ENCODE measurements at regions of chr19 and their contacts with region 1.

Region 1: GRCh38 chr19:53103198-53103944 is at the start of gene ZNF160:
- DNase-seq: peak; percentile 99 to 100 (median 99)
- ATAC-seq: peak; percentile 95
- H3K4me3 ChIP-seq: peak within 1 kb of the TSS; percentile 72 to 83
- H3K4me3 Mint-ChIP-seq: peak within 1 kb of the TSS; percentile 92
- H3K27ac ChIP-seq: peak within 1 kb of the TSS; percentile 89 to 90
- H3K27ac Mint-ChIP-seq: peak within 1 kb of the TSS; percentile 97
- H3K4me1 ChIP-seq: peaks cover 14% of the 10 kb centered on the region
- H3K4me1 Mint-ChIP-seq: peaks cover 37% of the 10 kb centered on the region
- H3K27me3 ChIP-seq: no peaks in the 10 kb centered on the region
- H3K27me3 Mint-ChIP-seq: no peaks in the 10 kb centered on the region
- CTCF ChIP-seq: no peak
- total RNA-seq, gene ZNF160: 50.8 to 53.3 TPM

Region 2: DNA sequence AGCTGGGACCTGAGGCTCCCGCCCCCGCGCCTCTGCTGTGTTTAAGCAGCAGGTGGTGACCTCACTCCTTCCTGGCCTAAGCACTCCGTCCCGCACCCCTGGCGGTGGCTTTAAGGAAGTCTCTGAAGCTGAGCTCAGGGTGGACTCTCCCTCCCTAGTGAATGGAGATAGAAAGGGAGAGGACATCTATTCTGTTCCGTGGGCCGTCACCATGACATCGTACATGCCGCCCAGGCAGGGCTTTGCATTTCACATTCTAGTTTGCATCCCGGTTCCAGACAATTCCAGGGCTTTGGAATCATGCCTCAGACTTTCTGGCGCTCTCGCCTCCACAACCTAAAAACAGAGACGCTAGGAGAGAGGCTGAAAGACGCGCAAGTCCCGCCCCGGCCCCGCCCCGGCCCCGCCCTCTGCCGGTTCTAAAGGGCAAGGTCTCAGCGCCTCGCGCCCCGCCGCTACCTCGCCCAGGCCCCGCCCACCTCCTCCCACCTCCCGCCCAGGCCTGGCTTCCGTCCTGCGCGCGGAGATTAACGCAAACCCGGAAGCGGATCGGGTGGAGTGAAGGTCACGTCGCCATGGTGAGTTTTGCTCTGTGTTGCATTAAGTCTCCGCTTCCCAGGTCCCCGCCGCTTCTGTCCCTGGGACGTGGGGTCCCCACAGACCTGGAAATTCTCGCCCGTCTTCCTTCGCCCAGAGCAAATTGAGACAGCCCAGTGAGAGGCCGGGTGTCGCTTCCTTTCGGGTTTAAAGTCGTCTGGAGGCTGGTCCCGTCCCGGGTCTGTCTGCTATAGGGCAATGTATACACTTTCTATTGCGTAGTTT is 576.0 kb before region 1 on chr19 and contains the start of gene ZNF808:
- CTCF ChIA-PET with region 1: no interaction called
- POLR2A ChIA-PET with region 1: no interaction called
- intact Hi-C with region 1: loop called in 1 of 2 experiments (anchors 1 kb)
- DNase-seq: peak; percentile 96 to 98 (median 97)
- ATAC-seq: peak; percentile 95
- H3K4me3 ChIP-seq: peak within 1 kb of the TSS; percentile 78 to 98
- H3K4me3 Mint-ChIP-seq: peak within 1 kb of the TSS; percentile 98
- H3K27ac ChIP-seq: peak within 1 kb of the TSS; percentile 89 to 97
- H3K27ac Mint-ChIP-seq: peak within 1 kb of the TSS; percentile 99
- H3K4me1 ChIP-seq: peaks cover 13% of the 10 kb centered on the region
- H3K4me1 Mint-ChIP-seq: peaks cover 29% of the 10 kb centered on the region
- H3K27me3 ChIP-seq: no peaks in the 10 kb centered on the region
- H3K27me3 Mint-ChIP-seq: no peaks in the 10 kb centered on the region
- CTCF ChIP-seq: peak; percentile 33
- total RNA-seq, gene ZNF808: 16.4 to 19.2 TPM

Region 3: GRCh38 chr19:52942386-52943133 is 160.8 kb before region 1 on chr19:
- CTCF ChIA-PET with region 1: no interaction called
- POLR2A ChIA-PET with region 1: no interaction called
- intact Hi-C with region 1: loop called (anchors 1 kb)
- DNase-seq: peak; percentile 91 to 97 (median 95)
- ATAC-seq: peak; percentile 99
- H3K4me3 ChIP-seq: peak overlapping the region; percentile 88 to 91
- H3K4me3 Mint-ChIP-seq: peak overlapping the region; percentile 95
- H3K27ac ChIP-seq: peak overlapping the region; percentile 66 to 86
- H3K27ac Mint-ChIP-seq: peak overlapping the region; percentile 93
- H3K4me1 ChIP-seq: peaks cover 7% of the 10 kb centered on the region
- H3K4me1 Mint-ChIP-seq: peaks cover 28% of the 10 kb centered on the region
- H3K27me3 ChIP-seq: no peaks in the 10 kb centered on the region
- H3K27me3 Mint-ChIP-seq: no peaks in the 10 kb centered on the region
- CTCF ChIP-seq: no peak

Region 4: DNA sequence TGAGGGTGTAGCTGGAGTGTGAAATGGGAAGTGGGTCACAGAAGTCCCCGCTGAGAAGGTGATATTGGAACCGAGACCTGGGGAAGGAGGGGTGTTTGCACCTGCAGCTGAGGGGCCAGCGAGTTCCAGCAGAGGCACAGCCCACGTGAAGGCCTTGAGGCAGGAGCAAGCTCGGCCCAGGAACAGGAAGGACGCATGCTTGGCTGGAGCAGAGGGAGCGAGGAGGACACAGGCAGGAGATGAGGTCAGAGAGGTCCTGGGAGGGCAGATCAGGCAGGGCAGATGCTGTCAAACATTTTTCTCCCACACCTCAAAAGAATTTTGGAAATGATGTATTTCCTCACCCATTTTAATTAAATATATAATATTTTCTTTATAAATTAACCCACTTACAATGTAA is 20.0 kb after region 1 on chr19:
- CTCF ChIA-PET with region 1: no interaction called
- POLR2A ChIA-PET with region 1: no interaction called
- intact Hi-C with region 1: no loop called
- DNase-seq: no peak
- ATAC-seq: no peak
- H3K4me3 ChIP-seq: no peak overlapping the region
- H3K4me3 Mint-ChIP-seq: no peak overlapping the region
- H3K27ac ChIP-seq: no peak overlapping the region
- H3K27ac Mint-ChIP-seq: no peak overlapping the region
- H3K4me1 ChIP-seq: no peaks in the 10 kb centered on the region
- H3K4me1 Mint-ChIP-seq: peaks cover 4% of the 10 kb centered on the region
- H3K27me3 ChIP-seq: no peaks in the 10 kb centered on the region
- H3K27me3 Mint-ChIP-seq: peaks cover 3% of the 10 kb centered on the region
- CTCF ChIP-seq: no peak

Region 5: DNA sequence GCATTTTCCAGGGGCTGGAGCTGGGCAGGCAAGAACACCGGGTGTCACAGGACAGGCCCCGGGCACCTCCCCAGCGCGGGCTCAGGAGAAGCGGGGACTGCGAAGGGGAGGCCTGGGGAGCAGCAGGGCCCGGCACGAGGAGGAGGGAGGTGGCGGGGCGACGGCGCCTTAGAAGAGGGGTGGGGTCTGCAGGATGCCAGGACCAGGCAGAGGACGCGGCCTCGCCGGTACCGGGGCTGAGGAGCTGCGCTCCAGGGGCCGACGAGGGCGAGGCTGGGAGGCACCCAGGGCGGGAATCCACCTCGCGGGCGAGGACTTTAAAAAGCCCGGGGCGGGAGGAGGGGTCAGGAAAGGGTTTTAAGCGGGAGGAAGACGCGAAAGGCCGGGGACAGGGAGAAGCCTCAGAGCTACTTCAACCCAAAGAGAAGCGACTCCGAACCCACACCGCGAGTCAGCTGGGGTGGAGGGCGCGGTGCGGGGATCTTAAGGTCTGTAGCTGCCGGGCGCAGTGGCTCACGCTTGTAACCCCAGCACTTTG is 54.8 kb after region 1 on chr19:
- CTCF ChIA-PET with region 1: no interaction called
- POLR2A ChIA-PET with region 1: interaction called, 3 read pairs
- intact Hi-C with region 1: loop called (anchors 1 kb)
- DNase-seq: peak in 7 of 9 experiments; percentile 4 to 63 (median 47)
- ATAC-seq: peak; percentile 42
- H3K4me3 ChIP-seq: peak overlapping the region; percentile 59 to 60
- H3K4me3 Mint-ChIP-seq: peak overlapping the region; percentile 77
- H3K27ac ChIP-seq: peak overlapping the region; percentile 44 to 52
- H3K27ac Mint-ChIP-seq: peak overlapping the region; percentile 79
- H3K4me1 ChIP-seq: peaks cover 13% of the 10 kb centered on the region
- H3K4me1 Mint-ChIP-seq: peaks cover 23% of the 10 kb centered on the region
- H3K27me3 ChIP-seq: no peaks in the 10 kb centered on the region
- H3K27me3 Mint-ChIP-seq: no peaks in the 10 kb centered on the region
- CTCF ChIP-seq: no peak

Region 6: GRCh38 chr19:53246498-53246897 is 143.1 kb after region 1 on chr19:
- CTCF ChIA-PET with region 1: no interaction called
- POLR2A ChIA-PET with region 1: no interaction called
- intact Hi-C with region 1: no loop called
- DNase-seq: no peak
- ATAC-seq: no peak
- H3K4me3 ChIP-seq: no peak overlapping the region
- H3K4me3 Mint-ChIP-seq: no peak overlapping the region
- H3K27ac ChIP-seq: no peak overlapping the region
- H3K27ac Mint-ChIP-seq: no peak overlapping the region
- H3K4me1 ChIP-seq: no peaks in the 10 kb centered on the region
- H3K4me1 Mint-ChIP-seq: no peaks in the 10 kb centered on the region
- H3K27me3 ChIP-seq: no peaks in the 10 kb centered on the region
- H3K27me3 Mint-ChIP-seq: no peaks in the 10 kb centered on the region
- CTCF ChIP-seq: no peak

Region 7: DNA sequence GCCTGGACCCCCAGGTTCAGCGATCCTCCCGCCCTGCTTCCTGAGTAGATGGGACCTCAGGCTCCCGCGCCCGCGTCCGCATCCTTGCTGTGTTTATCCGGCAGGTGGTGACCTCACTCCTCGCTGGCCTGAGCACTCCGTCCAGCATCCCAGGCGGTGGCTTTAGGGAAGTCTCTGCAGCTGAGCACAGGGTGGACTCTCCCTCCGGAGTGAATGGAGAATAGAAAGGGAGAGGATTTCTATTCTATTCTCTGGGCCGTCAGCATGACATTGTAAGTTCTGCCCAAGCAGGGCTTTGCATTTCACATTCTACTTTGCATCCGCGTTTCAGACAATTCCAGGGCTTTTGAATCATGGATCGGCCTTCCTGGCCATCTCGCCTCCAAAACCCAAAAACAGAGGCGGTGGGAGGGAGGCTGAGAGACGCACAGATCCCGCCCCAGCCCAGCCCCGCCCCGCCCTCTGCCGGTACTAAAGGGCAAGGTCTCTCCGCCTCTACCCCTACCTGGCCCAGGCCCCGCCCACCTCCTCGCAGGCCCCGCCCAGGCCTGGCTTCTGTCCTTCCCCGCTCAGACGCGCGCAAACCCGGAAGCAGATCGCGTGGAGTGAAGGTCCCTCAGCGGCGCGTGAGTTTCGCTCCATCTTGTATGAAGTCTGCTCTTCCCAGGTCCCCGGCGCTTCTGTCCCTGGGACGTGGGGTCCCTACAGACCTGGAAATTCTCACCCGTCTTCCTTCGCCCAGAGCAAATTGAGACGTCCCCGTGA is 261.9 kb after region 1 on chr19 and contains the start of gene ZNF525:
- CTCF ChIA-PET with region 1: no interaction called
- POLR2A ChIA-PET with region 1: no interaction called
- intact Hi-C with region 1: loop called (anchors 1 to 2 kb)
- DNase-seq: peak; percentile 95 to 99 (median 97)
- ATAC-seq: peak; percentile 100
- H3K4me3 ChIP-seq: peak within 1 kb of the TSS; percentile 85 to 99
- H3K4me3 Mint-ChIP-seq: peak within 1 kb of the TSS; percentile 96
- H3K27ac ChIP-seq: peak within 1 kb of the TSS; percentile 86 to 91
- H3K27ac Mint-ChIP-seq: peak within 1 kb of the TSS; percentile 99
- H3K4me1 ChIP-seq: peaks cover 9% of the 10 kb centered on the region
- H3K4me1 Mint-ChIP-seq: peaks cover 29% of the 10 kb centered on the region
- H3K27me3 ChIP-seq: no peaks in the 10 kb centered on the region
- H3K27me3 Mint-ChIP-seq: no peaks in the 10 kb centered on the region
- CTCF ChIP-seq: peak; percentile 54
- total RNA-seq, gene ZNF525: 25.6 to 26.4 TPM

Region 8: DNA sequence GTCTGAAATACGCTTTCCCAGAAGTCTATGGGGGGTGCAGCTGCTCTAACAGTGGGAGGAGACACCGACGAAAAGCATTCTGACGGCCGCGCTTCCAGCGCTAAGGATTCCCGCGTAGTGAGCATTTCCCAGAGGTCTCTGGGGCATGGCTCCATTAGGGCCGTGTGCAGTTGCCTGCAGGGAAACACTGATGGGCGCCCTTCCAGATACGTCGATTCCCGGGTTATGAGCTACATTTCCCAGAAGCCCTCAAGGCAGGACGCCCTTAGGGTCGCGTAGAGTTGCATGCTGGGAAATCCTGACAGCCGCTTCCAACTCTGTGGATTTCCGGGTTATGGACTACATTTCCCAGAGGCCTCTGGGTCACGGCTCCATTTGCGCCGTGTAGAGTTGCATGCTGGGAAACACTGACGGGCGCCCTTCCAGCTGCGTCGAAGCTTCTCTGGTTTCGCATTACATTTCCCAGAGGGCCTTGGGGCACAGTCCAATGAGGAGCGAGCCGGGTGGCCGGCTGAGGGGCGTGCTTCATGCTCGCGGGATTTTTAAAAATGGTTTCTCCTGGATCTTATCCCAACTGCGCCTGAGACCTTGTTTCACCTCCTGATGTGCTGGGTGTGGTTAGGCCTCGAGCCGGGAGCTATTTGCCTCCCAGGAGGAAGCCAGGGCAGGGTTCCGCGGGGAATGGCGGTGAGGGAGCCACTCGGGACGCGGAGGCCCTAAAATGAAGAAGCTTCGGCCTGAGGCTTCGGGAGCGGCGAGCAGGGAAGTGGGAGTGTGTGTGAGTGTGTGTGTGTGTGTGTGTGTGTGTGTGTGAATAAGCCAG is 417.4 kb after region 1 on chr19:
- CTCF ChIA-PET with region 1: no interaction called
- POLR2A ChIA-PET with region 1: no interaction called
- intact Hi-C with region 1: loop called in 1 of 2 experiments (anchors 2 kb)
- DNase-seq: peak; percentile 77 to 97 (median 85)
- ATAC-seq: peak; percentile 99
- H3K4me3 ChIP-seq: peak overlapping the region; percentile 54 to 63
- H3K4me3 Mint-ChIP-seq: peak overlapping the region; percentile 94
- H3K27ac ChIP-seq: peak overlapping the region; percentile 26 to 78
- H3K27ac Mint-ChIP-seq: peak overlapping the region; percentile 92
- H3K4me1 ChIP-seq: peaks cover 12% of the 10 kb centered on the region
- H3K4me1 Mint-ChIP-seq: peaks cover 17% of the 10 kb centered on the region
- H3K27me3 ChIP-seq: no peaks in the 10 kb centered on the region
- H3K27me3 Mint-ChIP-seq: no peaks in the 10 kb centered on the region
- CTCF ChIP-seq: no peak